Mammary epithelial cell (primary cell): ENCODE measurements at regions of chr2 and their contacts with region 1.

Region 1: GRCh38 chr2:46097714-46098480 is 199.3 kb upstream of the EPAS1 start:
- DNase-seq: peak; percentile 92
- H3K4me3 ChIP-seq: no peak overlapping the region
- H3K27ac ChIP-seq: peak overlapping the region; percentile 89
- H3K4me1 ChIP-seq: peaks cover 23% of the 10 kb centered on the region
- H3K27me3 ChIP-seq: no peaks in the 10 kb centered on the region
- CTCF ChIP-seq: no peak

Region 2: GRCh38 chr2:46117379-46117778 is 19.5 kb after region 1 on chr2:
- CTCF ChIA-PET with region 1: interaction called, 3 read pairs
- dilution Hi-C with region 1: no loop called
- in situ Hi-C with region 1: no loop called
- intact Hi-C with region 1: loop called (anchors 1 kb)
- DNase-seq: peak; percentile 81
- H3K4me3 ChIP-seq: no peak overlapping the region
- H3K27ac ChIP-seq: peak overlapping the region; percentile 34
- H3K4me1 ChIP-seq: peaks cover 14% of the 10 kb centered on the region
- H3K27me3 ChIP-seq: no peaks in the 10 kb centered on the region
- CTCF ChIP-seq: no peak